ENCODE measurements at regions of chr22 and their contacts with region 1.

Region 1: GRCh38 chr22:26461188-26461810 is 22.3 kb downstream of the HPS4 start:
- DNase-seq: peak; percentile 12
- H3K4me3 ChIP-seq: no peak overlapping the region
- H3K27ac ChIP-seq: no peak overlapping the region
- H3K4me1 ChIP-seq: peaks cover 29% of the 10 kb centered on the region
- H3K27me3 ChIP-seq: no peaks in the 10 kb centered on the region
- CTCF ChIP-seq: peak; percentile 70 to 80

Region 2: DNA sequence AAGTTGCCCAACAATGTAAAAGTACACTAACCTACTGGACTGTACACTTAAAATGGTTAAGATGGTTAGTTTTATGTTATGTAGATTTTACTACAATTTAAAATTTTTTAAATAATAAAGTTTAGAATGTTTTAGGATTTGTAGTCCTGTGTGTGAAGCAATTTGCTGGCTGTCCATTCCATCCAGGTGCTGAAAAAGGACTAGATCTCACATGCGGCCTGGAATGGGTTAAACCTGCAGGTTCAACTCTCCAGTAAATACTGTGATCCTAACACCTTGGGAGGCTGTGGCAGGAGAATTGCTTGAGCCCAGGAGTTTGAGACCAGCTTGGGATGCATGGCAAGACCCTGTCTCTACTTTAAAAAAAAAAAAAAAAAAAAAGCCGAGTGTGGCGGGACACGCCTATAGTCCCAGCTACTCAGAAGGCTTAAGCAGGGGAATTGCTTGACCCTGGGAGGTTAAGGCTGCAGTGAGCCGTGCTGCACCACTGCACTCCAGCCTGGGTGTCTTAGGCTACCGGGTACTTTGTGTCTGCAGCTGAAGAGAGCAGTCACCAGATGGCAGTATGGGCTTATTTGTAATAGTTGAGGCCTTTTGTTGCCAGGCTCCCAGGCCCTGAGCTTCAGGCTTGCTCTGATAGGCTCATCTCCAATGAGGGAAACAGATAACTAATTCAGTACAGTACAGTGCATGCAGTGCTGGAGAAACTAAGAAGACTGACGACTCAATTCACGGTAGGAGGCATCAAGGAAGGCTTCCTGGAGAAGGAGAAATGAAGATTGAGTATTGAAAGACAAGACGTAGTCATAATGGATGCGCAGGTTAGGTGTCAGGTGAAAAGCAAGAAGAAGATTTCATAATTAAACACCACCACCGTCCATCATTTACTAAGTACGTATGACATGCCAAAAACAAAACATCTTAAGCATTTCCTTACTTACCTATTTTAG is 97.0 kb before region 1 on chr22:
- CTCF ChIA-PET with region 1: no interaction called
- dilution Hi-C with region 1: no loop called
- in situ Hi-C with region 1: no loop called
- intact Hi-C with region 1: loop called (anchors 1 kb)
- DNase-seq: peak; percentile 64
- H3K4me3 ChIP-seq: no peak overlapping the region
- H3K27ac ChIP-seq: no peak overlapping the region
- H3K4me1 ChIP-seq: peaks cover 7% of the 10 kb centered on the region
- H3K27me3 ChIP-seq: no peaks in the 10 kb centered on the region
- CTCF ChIP-seq: peak; percentile 62 to 79

Region 3: GRCh38 chr22:26398741-26399153 is 62.6 kb before region 1 on chr22:
- CTCF ChIA-PET with region 1: interaction called, 5 read pairs
- dilution Hi-C with region 1: loop called (anchors 10 kb)
- in situ Hi-C with region 1: loop called (anchors 5 to 10 kb)
- intact Hi-C with region 1: loop called (anchors 1 kb)
- DNase-seq: peak; percentile 55
- H3K4me3 ChIP-seq: no peak overlapping the region
- H3K27ac ChIP-seq: no peak overlapping the region
- H3K4me1 ChIP-seq: no peaks in the 10 kb centered on the region
- H3K27me3 ChIP-seq: no peaks in the 10 kb centered on the region
- CTCF ChIP-seq: peak; percentile 84

Region 4: DNA sequence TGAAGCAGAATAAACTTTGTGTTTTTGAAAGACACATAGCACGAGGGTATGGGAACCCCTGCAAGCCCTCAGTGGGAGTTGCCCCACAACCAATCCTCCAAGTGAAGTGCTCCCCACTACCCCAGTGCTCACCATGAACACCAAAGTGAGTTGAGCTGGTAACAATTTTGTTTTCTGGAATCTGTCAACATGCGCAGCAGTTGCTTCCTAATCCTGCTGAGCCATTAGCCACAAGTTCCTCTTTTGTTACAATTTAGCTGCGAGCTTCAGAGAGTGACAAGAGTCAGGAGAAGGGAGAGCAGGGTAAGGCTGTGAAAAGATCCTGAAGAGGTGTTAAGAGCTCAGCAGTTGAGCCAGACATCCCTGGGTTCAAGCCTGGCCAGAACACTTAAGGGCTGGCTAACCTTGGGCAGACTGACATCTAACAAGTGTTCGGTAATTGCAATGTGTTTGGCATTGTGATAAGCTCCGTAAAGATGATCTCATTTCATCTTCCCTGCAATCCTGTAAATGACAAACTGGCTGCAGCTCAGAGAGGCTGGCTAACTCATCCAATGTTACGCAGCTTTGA is 56.4 kb before region 1 on chr22:
- CTCF ChIA-PET with region 1: interaction called, 5 read pairs
- dilution Hi-C with region 1: no loop called
- in situ Hi-C with region 1: loop called (anchors 5 to 10 kb)
- intact Hi-C with region 1: no loop called
- DNase-seq: no peak
- H3K4me3 ChIP-seq: no peak overlapping the region
- H3K27ac ChIP-seq: no peak overlapping the region
- H3K4me1 ChIP-seq: no peaks in the 10 kb centered on the region
- H3K27me3 ChIP-seq: no peaks in the 10 kb centered on the region
- CTCF ChIP-seq: no peak

Region 5: DNA sequence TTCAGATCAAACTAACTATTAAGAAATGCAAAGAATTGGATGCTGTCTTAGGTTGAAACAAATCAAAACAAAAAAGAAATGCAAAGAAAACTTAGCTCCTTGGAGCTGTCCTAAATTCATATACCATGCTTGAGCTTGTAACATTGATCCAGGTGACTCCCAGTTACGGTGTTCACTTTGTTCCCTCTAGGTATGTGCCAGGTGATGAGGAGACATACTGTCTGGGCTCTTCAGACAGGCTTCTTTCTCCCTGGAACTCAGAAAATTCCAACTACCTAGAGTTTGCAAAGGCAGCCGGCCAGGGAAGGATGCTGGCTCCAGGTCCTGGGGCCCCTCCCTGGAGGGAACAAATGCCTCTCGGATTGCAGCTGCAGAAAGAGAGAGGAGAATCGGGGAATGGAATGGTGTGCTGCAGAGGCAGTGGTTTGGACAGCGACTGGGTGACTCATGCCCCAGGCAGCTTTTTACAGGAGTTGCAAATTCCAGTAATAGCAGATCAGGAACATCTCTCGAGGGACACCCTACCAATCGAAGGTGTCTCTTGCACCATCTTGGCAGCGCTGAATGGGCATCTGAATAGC is 44.5 kb before region 1 on chr22:
- CTCF ChIA-PET with region 1: no interaction called
- dilution Hi-C with region 1: loop called (anchors 5 kb)
- in situ Hi-C with region 1: no loop called
- intact Hi-C with region 1: no loop called
- DNase-seq: peak; percentile 71
- H3K4me3 ChIP-seq: peak overlapping the region in 1 of 3 experiments; percentile 15
- H3K27ac ChIP-seq: no peak overlapping the region
- H3K4me1 ChIP-seq: peaks cover 23% of the 10 kb centered on the region
- H3K27me3 ChIP-seq: peaks cover 1% of the 10 kb centered on the region
- CTCF ChIP-seq: no peak

Region 6: GRCh38 chr22:26529345-26529744 is 68.0 kb after region 1 on chr22:
- CTCF ChIA-PET with region 1: no interaction called
- dilution Hi-C with region 1: loop called (anchors 10 kb)
- in situ Hi-C with region 1: no loop called
- intact Hi-C with region 1: no loop called
- DNase-seq: no peak
- H3K4me3 ChIP-seq: no peak overlapping the region
- H3K27ac ChIP-seq: no peak overlapping the region
- H3K4me1 ChIP-seq: peaks cover 7% of the 10 kb centered on the region
- H3K27me3 ChIP-seq: no peaks in the 10 kb centered on the region
- CTCF ChIP-seq: no peak

Measured in mammary epithelial cell (primary cell).